Heart left ventricle (tissue), 16 donors: ENCODE measurements at regions of chr16 and their contacts with region 1.

Region 1: GRCh38 chr16:74226338-74226954 is 70.2 kb upstream of the PSMD7 start:
- DNase-seq: no peak
- ATAC-seq: no peak
- H3K4me3 ChIP-seq: no peak overlapping the region
- H3K27ac ChIP-seq: no peak overlapping the region
- H3K4me1 ChIP-seq: peaks cover 0 to 8% (median 0%) of the 10 kb centered on the region in 12 donors
- H3K27me3 ChIP-seq: peaks cover 0 to 7% (median 0%) of the 10 kb centered on the region in 9 donors
- CTCF ChIP-seq: peak; percentile 20 to 62 (median 40)
- POLR2A ChIP-seq: no peak

Region 2: GRCh38 chr16:74079232-74079586 is 147.2 kb before region 1 on chr16:
- intact Hi-C with region 1: loop called in 1 of 10 experiments (anchors 10 kb)
- DNase-seq: no peak
- ATAC-seq: no peak
- H3K4me3 ChIP-seq: no peak overlapping the region
- H3K27ac ChIP-seq: no peak overlapping the region
- H3K4me1 ChIP-seq: no peaks in the 10 kb centered on the region
- H3K27me3 ChIP-seq: no peaks in the 10 kb centered on the region
- CTCF ChIP-seq: no peak
- POLR2A ChIP-seq: no peak

Region 3: GRCh38 chr16:74113545-74113944 is 112.9 kb before region 1 on chr16:
- intact Hi-C with region 1: no loop called
- DNase-seq: no peak
- ATAC-seq: no peak
- H3K4me3 ChIP-seq: no peak overlapping the region
- H3K27ac ChIP-seq: no peak overlapping the region
- H3K4me1 ChIP-seq: no peaks in the 10 kb centered on the region
- H3K27me3 ChIP-seq: no peaks in the 10 kb centered on the region
- CTCF ChIP-seq: no peak
- POLR2A ChIP-seq: no peak